GM12878 (cell line): ENCODE measurements at regions of chr9 and their contacts with region 1.

Region 1: DNA sequence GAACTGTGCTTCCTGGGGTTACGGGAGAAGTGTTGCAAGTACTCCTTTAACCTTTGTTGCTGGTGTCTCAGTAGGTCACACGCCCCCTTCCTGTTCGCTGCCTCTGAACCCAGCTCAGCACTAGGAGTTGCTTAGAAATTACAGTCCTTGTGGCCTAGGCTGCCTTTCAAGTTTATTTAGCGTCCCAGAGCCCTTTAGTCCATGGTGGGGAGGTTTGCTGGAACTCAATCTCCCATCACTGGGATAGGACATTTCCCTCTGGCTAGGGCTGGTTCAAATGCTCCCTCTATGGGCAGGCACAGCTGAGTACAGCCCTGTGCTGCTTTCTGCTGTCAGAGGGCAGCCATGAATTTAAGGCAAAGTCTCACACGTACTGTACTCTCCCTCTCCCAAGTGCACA is 4.7 kb downstream of the IFNA8 start:
- DNase-seq: no peak
- ATAC-seq: peak; percentile 96
- H3K4me3 ChIP-seq: no peak overlapping the region
- H3K27ac ChIP-seq: no peak overlapping the region
- H3K4me1 ChIP-seq: peaks cover 6% of the 10 kb centered on the region; the same call in 1 of the 2 replicates
- H3K27me3 ChIP-seq: no peaks in the 10 kb centered on the region; a peak in 1 of 4 replicates
- CTCF ChIP-seq: peak; percentile 50 to 70 (median 69); a peak in 5 of 6 replicates
- EP300 ChIP-seq: no peak
- POLR2A ChIP-seq: no peak
- RAD21 ChIP-seq: peak; percentile 55

Region 2: DNA sequence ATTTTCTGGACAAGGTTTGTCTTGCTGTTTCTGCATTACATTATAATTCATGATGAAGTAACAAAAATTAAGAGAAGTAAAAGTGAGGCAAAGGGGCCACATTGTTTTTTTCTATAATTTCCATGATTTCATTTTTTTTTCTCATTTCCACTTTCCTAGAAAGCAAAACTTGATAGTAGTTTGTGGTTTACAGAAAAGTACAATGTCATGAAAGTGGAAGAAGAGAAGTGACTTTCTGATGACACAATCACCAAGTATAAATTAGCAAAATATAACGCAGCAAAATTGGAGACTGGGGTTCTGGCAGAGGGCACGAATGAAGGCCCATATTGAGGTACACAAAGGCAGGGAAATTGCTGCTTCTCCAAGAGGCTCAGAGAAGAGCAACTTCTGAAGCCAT is 168.8 kb before region 1 on chr9:
- CTCF ChIA-PET with region 1: no interaction called
- POLR2A ChIA-PET with region 1: no interaction called
- RAD21 ChIA-PET with region 1: no interaction called
- SMC1A ChIA-PET with region 1: no interaction called
- in situ Hi-C with region 1: no loop called
- intact Hi-C with region 1: loop called (anchors 5 kb)
- DNase-seq: no peak
- ATAC-seq: peak; percentile 55
- H3K4me3 ChIP-seq: no peak overlapping the region
- H3K27ac ChIP-seq: no peak overlapping the region
- H3K4me1 ChIP-seq: peaks cover 1% of the 10 kb centered on the region; the same call in 1 of the 2 replicates
- H3K27me3 ChIP-seq: no peaks in the 10 kb centered on the region; a peak in 1 of 4 replicates
- CTCF ChIP-seq: no peak
- EP300 ChIP-seq: no peak
- POLR2A ChIP-seq: no peak
- RAD21 ChIP-seq: no peak

Region 3: DNA sequence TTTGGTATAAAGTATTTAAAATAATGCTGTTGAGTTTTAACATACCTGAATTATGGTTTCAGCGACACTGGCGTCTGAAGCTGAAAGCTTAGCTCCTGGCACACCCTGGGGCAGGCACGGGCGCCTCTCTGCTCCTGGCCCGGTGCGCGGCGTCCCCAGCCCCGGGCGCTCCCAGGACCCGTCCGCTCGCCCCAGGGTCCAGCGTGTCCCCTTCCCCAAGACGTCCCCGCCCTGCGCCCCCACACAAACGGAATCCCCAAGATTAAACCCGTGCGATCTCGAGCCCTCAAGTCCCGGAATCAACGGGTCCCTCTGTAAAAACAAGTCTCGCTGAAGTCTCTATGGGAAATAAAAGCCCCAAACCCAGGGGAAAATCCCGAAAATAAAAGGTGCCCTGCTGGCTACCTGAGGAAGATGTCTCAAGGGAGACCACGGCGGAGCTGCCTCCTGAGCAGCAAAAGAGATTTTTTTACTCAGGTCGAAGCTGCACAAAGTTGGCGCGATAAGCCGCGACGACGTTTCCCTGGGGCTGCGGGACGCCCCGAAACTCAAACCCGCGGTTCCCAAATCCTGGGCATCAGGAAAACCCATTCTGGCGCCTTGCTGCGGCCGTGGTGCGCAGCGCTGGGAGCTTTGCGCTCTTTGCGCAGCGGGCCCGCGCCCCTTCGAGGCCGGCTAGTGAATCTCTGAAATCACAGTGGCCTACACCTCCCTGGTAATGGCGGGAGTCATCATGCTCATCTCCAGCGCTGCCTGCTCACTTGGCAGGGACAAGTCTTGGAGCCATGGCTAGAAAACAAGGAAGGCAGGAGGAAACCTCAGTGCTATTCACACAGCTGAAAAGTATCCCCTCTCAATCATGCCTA is 11.0 kb before region 1 on chr9:
- CTCF ChIA-PET with region 1: interaction called, 11 read pairs
- POLR2A ChIA-PET with region 1: no interaction called
- RAD21 ChIA-PET with region 1: interaction called, 3 read pairs
- SMC1A ChIA-PET with region 1: interaction called, 8 read pairs
- in situ Hi-C with region 1: no loop called
- intact Hi-C with region 1: no loop called
- DNase-seq: no peak
- ATAC-seq: peak; percentile 83
- H3K4me3 ChIP-seq: peak overlapping the region; percentile 53; the same call in 1 of the 2 replicates
- H3K27ac ChIP-seq: no peak overlapping the region
- H3K4me1 ChIP-seq: no peaks in the 10 kb centered on the region
- H3K27me3 ChIP-seq: peaks cover 0 to 2% of the 10 kb centered on the region in 2 experiments; a peak in 2 of 4 replicates
- CTCF ChIP-seq: peak; percentile 2 to 32 (median 16); a peak in 2 of 6 replicates
- EP300 ChIP-seq: no peak
- POLR2A ChIP-seq: no peak
- RAD21 ChIP-seq: no peak

Region 4: DNA sequence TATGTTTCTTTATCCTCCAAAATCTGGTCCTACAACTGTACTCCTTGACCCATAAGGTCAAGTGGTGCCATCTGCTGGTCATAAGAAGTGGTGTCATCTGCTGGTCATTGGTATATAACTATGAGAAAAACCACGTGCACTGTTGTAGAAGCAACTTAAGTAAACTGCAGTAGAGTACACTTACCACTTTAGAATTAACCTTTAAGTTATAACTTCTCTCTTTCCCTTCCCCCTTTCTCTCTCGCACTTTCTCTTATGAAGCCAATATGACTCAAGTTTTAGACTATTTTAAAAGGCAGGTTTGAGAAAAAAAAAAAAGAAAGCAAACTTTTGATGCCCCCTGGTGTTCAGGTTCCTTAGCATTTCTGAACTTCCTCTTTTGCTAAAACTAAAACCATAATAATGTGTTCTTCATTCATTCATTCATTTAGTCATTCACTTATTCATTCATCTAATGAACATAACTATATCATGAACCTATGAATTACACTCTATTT is 376.0 kb after region 1 on chr9:
- CTCF ChIA-PET with region 1: no interaction called
- POLR2A ChIA-PET with region 1: no interaction called
- RAD21 ChIA-PET with region 1: no interaction called
- SMC1A ChIA-PET with region 1: no interaction called
- in situ Hi-C with region 1: no loop called
- intact Hi-C with region 1: no loop called
- DNase-seq: peak; percentile 40
- ATAC-seq: peak; percentile 100
- H3K4me3 ChIP-seq: no peak overlapping the region
- H3K27ac ChIP-seq: no peak overlapping the region
- H3K4me1 ChIP-seq: no peaks in the 10 kb centered on the region
- H3K27me3 ChIP-seq: peaks cover 0 to 5% of the 10 kb centered on the region in 2 experiments; a peak in 2 of 4 replicates
- CTCF ChIP-seq: peak; percentile 63 to 72 (median 66)
- EP300 ChIP-seq: no peak
- POLR2A ChIP-seq: no peak
- RAD21 ChIP-seq: peak; percentile 74